CD4-positive, alpha-beta memory T cell (primary cell): ENCODE measurements at regions of chr14 and their contacts with region 1.

Region 1: DNA sequence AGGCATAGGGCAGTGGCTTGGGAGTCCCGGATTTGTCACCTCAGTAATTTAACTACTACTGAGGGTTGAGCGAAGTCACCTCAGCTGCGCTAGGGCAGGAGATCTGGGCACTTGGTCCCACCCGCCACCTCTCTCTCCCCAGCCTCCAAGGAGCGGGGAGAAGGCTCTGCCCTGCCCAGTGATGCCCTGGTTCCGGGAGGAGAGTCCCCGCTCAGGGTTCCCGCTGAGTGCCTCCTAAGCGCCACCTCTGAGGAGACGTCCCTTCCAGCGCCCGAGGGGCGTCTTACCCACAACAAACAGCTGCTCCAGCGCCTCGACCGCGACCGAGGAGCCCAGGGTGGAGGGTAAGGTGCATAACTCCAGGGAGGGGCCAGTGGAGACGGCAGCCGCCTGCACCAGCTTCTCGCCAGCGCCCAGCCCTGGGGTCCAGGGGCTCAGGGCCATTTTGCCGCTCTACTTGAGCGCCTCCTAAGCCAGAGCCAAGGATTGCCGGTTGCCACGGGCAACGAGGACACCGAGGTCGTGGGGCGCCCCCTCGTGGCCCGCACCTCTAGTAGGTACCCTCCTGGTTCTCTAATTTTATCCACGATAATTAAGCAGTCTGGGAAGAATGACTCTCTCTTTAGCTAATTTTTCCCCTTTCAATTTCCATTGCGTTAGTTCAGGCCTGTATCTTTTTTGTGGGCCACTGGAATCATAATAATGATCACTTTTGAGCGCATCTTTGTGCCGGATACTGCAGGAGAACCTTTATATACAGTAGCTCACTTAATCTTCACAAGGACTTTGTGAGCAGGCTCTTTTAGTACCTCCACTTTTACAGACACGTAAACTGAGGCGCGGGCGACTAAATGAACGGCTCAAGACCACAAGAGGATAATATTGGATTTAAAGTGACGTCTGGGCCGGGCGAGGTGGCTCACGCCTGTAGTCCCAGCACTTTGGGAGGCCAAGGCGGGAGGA is at the start of gene CCDC175:
- DNase-seq: peak; percentile 76 to 84 (median 80)
- H3K4me3 ChIP-seq: peak within 1 kb of the TSS; percentile 63 to 69
- H3K4me3 Mint-ChIP-seq: peak within 1 kb of the TSS; percentile 76 to 88 (median 82)
- H3K27ac ChIP-seq: no peak within 1 kb of the TSS
- H3K27ac Mint-ChIP-seq: peak within 1 kb of the TSS in 6 of 7 donors; percentile 0 to 91 (median 42)
- H3K4me1 ChIP-seq: peaks cover 10% of the 10 kb centered on the region
- H3K4me1 Mint-ChIP-seq: peaks cover 5 to 11% (median 6%) of the 10 kb centered on the region in 4 donors
- H3K27me3 ChIP-seq: no peaks in the 10 kb centered on the region
- H3K27me3 Mint-ChIP-seq: peaks cover 3 to 4% of the 10 kb centered on the region in 2 donors
- total RNA-seq, gene CCDC175: not detected

Region 2: GRCh38 chr14:58501214-58501816 is 1075.3 kb before region 1 on chr14:
- CTCF ChIA-PET with region 1: interaction called, 12 read pairs
- POLR2A ChIA-PET with region 1: no interaction called
- intact Hi-C with region 1: loop called (anchors 1 kb)
- DNase-seq: peak in 4 of 5 donors; percentile 28 to 30 (median 28)
- H3K4me3 ChIP-seq: no peak overlapping the region
- H3K4me3 Mint-ChIP-seq: no peak overlapping the region
- H3K27ac ChIP-seq: no peak overlapping the region
- H3K27ac Mint-ChIP-seq: no peak overlapping the region
- H3K4me1 ChIP-seq: no peaks in the 10 kb centered on the region
- H3K4me1 Mint-ChIP-seq: no peaks in the 10 kb centered on the region
- H3K27me3 ChIP-seq: no peaks in the 10 kb centered on the region
- H3K27me3 Mint-ChIP-seq: no peaks in the 10 kb centered on the region

Region 3: GRCh38 chr14:59438195-59438647 is 138.4 kb before region 1 on chr14:
- CTCF ChIA-PET with region 1: no interaction called
- POLR2A ChIA-PET with region 1: no interaction called
- intact Hi-C with region 1: loop called (anchors 5 kb)
- DNase-seq: no peak
- H3K4me3 ChIP-seq: no peak overlapping the region
- H3K4me3 Mint-ChIP-seq: no peak overlapping the region
- H3K27ac ChIP-seq: no peak overlapping the region
- H3K27ac Mint-ChIP-seq: no peak overlapping the region
- H3K4me1 ChIP-seq: no peaks in the 10 kb centered on the region
- H3K4me1 Mint-ChIP-seq: no peaks in the 10 kb centered on the region
- H3K27me3 ChIP-seq: no peaks in the 10 kb centered on the region
- H3K27me3 Mint-ChIP-seq: no peaks in the 10 kb centered on the region

Region 4: DNA sequence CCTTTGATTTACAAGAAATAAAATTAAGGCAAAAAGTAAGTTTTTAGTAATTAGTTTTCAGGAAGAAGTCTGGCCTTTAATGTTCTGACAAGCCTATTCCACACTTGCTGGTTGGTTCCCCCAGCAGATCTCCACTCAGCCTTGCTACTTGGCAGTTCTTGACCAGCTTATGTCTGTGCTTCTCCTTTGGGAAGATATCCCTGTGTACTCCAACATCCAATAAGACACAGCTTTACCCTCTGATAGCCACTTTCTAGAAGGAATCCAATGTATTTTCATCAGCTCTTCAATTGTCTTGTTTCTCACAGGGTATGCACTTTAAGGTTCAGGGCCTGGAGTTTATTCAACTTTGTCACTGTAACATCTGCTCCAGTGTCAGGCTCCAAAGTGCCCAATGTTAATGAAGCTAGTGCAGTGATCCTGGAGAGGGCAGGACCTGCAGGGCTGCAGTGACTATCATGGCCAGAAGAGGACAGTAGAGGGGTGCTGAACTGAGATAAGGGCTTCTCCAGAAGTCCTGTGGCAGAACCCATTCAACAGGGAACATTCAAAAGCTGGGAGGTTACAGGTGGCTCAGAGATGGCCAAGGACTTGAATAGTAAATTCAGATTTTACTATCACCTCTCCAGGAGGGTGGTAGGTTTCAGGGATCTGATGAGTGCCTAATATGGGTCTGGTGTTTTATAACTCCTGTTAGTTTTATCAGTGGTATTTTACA is 69.4 kb before region 1 on chr14:
- CTCF ChIA-PET with region 1: interaction called, 14 read pairs
- POLR2A ChIA-PET with region 1: no interaction called
- intact Hi-C with region 1: loop called (anchors 1 kb)
- DNase-seq: peak; percentile 17 to 59 (median 33)
- H3K4me3 ChIP-seq: no peak overlapping the region
- H3K4me3 Mint-ChIP-seq: no peak overlapping the region
- H3K27ac ChIP-seq: no peak overlapping the region
- H3K27ac Mint-ChIP-seq: peak overlapping the region in 1 of 7 donors; percentile 25
- H3K4me1 ChIP-seq: peaks cover 16% of the 10 kb centered on the region
- H3K4me1 Mint-ChIP-seq: peaks cover 11 to 19% (median 11%) of the 10 kb centered on the region in 4 donors
- H3K27me3 ChIP-seq: no peaks in the 10 kb centered on the region
- H3K27me3 Mint-ChIP-seq: peaks cover 0 to 4% of the 10 kb centered on the region in 2 donors

Region 5: GRCh38 chr14:60091550-60092530 is 515.2 kb after region 1 on chr14 and contains the start of gene PCNX4:
- CTCF ChIA-PET with region 1: no interaction called
- POLR2A ChIA-PET with region 1: no interaction called
- intact Hi-C with region 1: loop called (anchors 2 kb)
- DNase-seq: peak; percentile 93 to 97 (median 96)
- H3K4me3 ChIP-seq: peak within 1 kb of the TSS; percentile 71 to 97
- H3K4me3 Mint-ChIP-seq: peak within 1 kb of the TSS; percentile 90 to 98 (median 92)
- H3K27ac ChIP-seq: peak within 1 kb of the TSS; percentile 99
- H3K27ac Mint-ChIP-seq: peak within 1 kb of the TSS; percentile 95 to 100 (median 97)
- H3K4me1 ChIP-seq: peaks cover 34% of the 10 kb centered on the region
- H3K4me1 Mint-ChIP-seq: peaks cover 27 to 55% (median 38%) of the 10 kb centered on the region in 4 donors
- H3K27me3 ChIP-seq: no peaks in the 10 kb centered on the region
- H3K27me3 Mint-ChIP-seq: no peaks in the 10 kb centered on the region
- total RNA-seq, gene PCNX4: 41.5 to 53.0 TPM